SK-N-SH (cell line): ENCODE measurements at regions of chr11 and their contacts with region 1.

Region 1: GRCh38 chr11:36478700-36479329 is 31.3 kb downstream of the TRAF6 start:
- DNase-seq: peak; percentile 45
- H3K4me3 ChIP-seq: no peak overlapping the region
- H3K27ac ChIP-seq: no peak overlapping the region
- H3K4me1 ChIP-seq: peaks cover 2 to 4% of the 10 kb centered on the region in 2 experiments; a peak in 2 of 4 replicates
- H3K27me3 ChIP-seq: no peaks in the 10 kb centered on the region
- CTCF ChIP-seq: peak; percentile 80
- EP300 ChIP-seq: no peak
- RAD21 ChIP-seq: peak; percentile 90

Region 2: DNA sequence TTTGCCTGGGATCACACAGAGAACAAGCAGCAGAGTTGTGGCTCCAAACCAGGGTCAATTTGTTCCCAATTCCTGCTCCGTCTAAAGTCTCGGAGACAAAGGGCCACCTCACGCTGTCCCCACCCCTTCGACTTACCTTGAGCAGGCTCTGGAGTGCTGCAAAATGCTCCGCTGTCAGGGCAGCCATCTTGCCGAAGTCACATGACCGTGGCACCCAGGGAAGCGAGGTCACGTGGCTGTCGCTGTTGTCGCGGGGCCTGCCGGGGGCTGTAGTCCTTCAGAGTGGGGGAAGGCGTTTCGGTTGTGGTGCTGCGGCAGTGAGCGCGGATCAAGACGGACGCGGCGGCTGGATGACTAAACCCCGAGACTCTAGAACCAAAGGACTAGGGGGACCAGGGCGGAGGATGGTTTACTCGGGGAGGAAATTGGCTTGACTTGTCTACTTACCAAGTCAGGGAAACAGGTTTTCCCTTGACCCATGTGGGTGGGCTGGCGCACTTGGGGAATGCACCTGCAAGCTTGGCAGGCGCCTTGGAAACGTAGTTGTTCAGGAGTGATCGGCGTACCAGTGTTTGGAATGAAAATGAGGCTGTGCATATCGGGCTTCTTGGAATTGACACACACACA is 189.5 kb before region 1 on chr11 and contains the start of gene COMMD9:
- CTCF ChIA-PET with region 1: interaction called, 109 read pairs
- POLR2A ChIA-PET with region 1: no interaction called
- DNase-seq: peak; percentile 92
- H3K4me3 ChIP-seq: peak within 1 kb of the TSS; percentile 66 to 89
- H3K27ac ChIP-seq: peak within 1 kb of the TSS in 1 of 2 experiments; percentile 32; a peak in 1 of 4 replicates
- H3K4me1 ChIP-seq: peaks cover 3 to 13% of the 10 kb centered on the region in 2 experiments; a peak in 3 of 4 replicates
- H3K27me3 ChIP-seq: no peaks in the 10 kb centered on the region
- CTCF ChIP-seq: no peak
- EP300 ChIP-seq: no peak
- RAD21 ChIP-seq: no peak
- polyA plus RNA-seq, gene COMMD9: 44.2 and 48.2 TPM in 2 replicates

Region 3: DNA sequence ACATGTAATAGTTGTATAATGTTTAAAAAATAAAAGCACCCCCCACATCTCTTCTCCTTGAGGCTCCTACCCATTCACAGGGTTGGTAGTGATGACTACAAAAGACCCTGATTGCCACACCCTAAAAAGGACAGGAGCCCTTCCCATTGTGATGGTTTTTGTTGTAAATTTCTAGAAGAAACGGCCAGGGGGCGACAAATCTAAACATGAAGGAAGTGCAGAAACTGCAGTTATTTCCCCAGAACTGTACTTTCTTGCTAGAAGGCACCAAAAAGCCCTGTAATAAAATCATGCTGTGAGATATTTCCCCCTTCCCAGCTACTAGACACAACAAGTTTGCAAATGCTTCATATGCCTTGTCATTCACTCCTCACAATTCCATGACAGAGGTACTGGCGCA is 171.9 kb before region 1 on chr11:
- CTCF ChIA-PET with region 1: interaction called, 10 read pairs
- POLR2A ChIA-PET with region 1: no interaction called
- DNase-seq: peak; percentile 37
- H3K4me3 ChIP-seq: no peak overlapping the region
- H3K27ac ChIP-seq: no peak overlapping the region
- H3K4me1 ChIP-seq: no peaks in the 10 kb centered on the region
- H3K27me3 ChIP-seq: no peaks in the 10 kb centered on the region
- CTCF ChIP-seq: peak; percentile 54
- EP300 ChIP-seq: no peak
- RAD21 ChIP-seq: peak; percentile 63

Region 4: GRCh38 chr11:36411202-36411640 is 67.6 kb before region 1 on chr11:
- CTCF ChIA-PET with region 1: no interaction called
- POLR2A ChIA-PET with region 1: no interaction called
- DNase-seq: no peak
- H3K4me3 ChIP-seq: no peak overlapping the region
- H3K27ac ChIP-seq: no peak overlapping the region
- H3K4me1 ChIP-seq: no peaks in the 10 kb centered on the region
- H3K27me3 ChIP-seq: no peaks in the 10 kb centered on the region
- CTCF ChIP-seq: no peak
- EP300 ChIP-seq: no peak
- RAD21 ChIP-seq: no peak

Region 5: GRCh38 chr11:36492724-36493304 is 14.0 kb after region 1 on chr11:
- CTCF ChIA-PET with region 1: interaction called, 31 read pairs
- POLR2A ChIA-PET with region 1: no interaction called
- DNase-seq: peak; percentile 46
- H3K4me3 ChIP-seq: no peak overlapping the region
- H3K27ac ChIP-seq: no peak overlapping the region
- H3K4me1 ChIP-seq: peaks cover 5 to 11% of the 10 kb centered on the region in 2 experiments; a peak in 3 of 4 replicates
- H3K27me3 ChIP-seq: no peaks in the 10 kb centered on the region
- CTCF ChIP-seq: peak; percentile 89
- EP300 ChIP-seq: no peak
- RAD21 ChIP-seq: peak; percentile 80